Caco-2 (cell line): ENCODE measurements at regions of chr12 and their contacts with region 1.

Region 1: GRCh38 chr12:12696562-12697383 is 790 bp upstream of the GPR19 start:
- DNase-seq: peak; percentile 91 to 93
- H3K4me3 ChIP-seq: peak overlapping the region; percentile 72
- H3K4me3 Mint-ChIP-seq: peak overlapping the region; percentile 79
- H3K27ac Mint-ChIP-seq: peak overlapping the region; percentile 90
- H3K4me1 ChIP-seq: peaks cover 14% of the 10 kb centered on the region
- H3K4me1 Mint-ChIP-seq: peaks cover 16% of the 10 kb centered on the region
- H3K27me3 ChIP-seq: no peaks in the 10 kb centered on the region
- H3K27me3 Mint-ChIP-seq: no peaks in the 10 kb centered on the region
- CTCF ChIP-seq: no peak

Region 2: DNA sequence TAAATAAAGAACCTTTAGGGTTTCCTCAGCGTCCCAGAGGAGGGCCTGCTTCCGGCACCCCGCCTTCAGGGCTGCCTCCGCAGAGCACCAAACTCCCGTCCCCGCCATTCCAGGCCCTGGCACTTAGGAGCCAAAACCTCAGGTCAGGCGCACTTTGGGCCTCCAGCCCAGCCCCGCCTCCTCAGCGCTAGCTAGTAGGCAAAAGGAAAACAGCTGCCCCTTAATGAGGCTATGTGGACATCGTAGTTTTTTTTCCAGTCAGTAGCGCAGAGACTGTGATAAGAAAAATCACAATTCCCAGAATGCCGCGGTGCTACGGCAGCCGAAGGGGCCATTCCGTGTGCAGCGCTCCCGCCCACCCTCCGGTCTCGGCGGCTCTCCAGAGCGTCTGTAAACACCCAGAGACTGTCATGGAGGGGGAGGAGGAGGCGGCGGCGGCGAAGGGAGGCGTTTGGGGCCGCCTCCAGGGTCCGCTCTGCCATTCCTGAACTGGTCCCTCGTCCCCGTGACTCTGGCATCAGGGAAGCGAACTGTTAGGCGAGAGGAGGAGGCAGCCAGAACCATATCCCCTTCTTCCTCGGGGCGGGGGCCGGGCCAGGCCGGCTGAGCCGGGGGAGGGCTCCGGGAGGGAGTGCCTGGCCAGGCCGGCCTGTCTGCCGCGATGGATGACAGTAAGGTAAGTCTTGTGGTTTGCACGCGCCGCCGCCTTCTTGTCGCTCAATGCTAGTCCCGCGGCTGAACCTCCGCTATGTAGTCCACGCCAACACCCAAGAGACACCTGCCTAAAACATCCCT is 85.1 kb before region 1 on chr12 and contains the start of gene CREBL2:
- CTCF ChIA-PET with region 1: interaction called, 3 read pairs
- POLR2A ChIA-PET with region 1: no interaction called
- intact Hi-C with region 1: loop called (anchors 1 kb)
- DNase-seq: peak; percentile 96
- H3K4me3 ChIP-seq: peak within 1 kb of the TSS; percentile 66
- H3K4me3 Mint-ChIP-seq: peak within 1 kb of the TSS; percentile 89
- H3K27ac Mint-ChIP-seq: peak within 1 kb of the TSS; percentile 57
- H3K4me1 ChIP-seq: peaks cover 11% of the 10 kb centered on the region
- H3K4me1 Mint-ChIP-seq: peaks cover 24% of the 10 kb centered on the region
- H3K27me3 ChIP-seq: no peaks in the 10 kb centered on the region
- H3K27me3 Mint-ChIP-seq: no peaks in the 10 kb centered on the region
- CTCF ChIP-seq: no peak
- total RNA-seq, gene CREBL2: 25.0 and 26.3 TPM in 2 replicates